Heart left ventricle (tissue), 16 donors: ENCODE measurements at regions of chr11 and their contacts with region 1.

Region 1: GRCh38 chr11:111230122-111230465 is 15.4 kb upstream of the POU2AF2 start:
- DNase-seq: no peak
- ATAC-seq: peak; percentile 26 to 58 (median 38)
- H3K4me3 ChIP-seq: peak overlapping the region in 9 of 12 donors; percentile 39 to 64 (median 52)
- H3K27ac ChIP-seq: no peak overlapping the region
- H3K4me1 ChIP-seq: peaks cover 0 to 5% (median 0%) of the 10 kb centered on the region in 12 donors
- H3K27me3 ChIP-seq: peaks cover 0 to 7% (median 0%) of the 10 kb centered on the region in 9 donors
- CTCF ChIP-seq: no peak
- POLR2A ChIP-seq: no peak

Region 2: DNA sequence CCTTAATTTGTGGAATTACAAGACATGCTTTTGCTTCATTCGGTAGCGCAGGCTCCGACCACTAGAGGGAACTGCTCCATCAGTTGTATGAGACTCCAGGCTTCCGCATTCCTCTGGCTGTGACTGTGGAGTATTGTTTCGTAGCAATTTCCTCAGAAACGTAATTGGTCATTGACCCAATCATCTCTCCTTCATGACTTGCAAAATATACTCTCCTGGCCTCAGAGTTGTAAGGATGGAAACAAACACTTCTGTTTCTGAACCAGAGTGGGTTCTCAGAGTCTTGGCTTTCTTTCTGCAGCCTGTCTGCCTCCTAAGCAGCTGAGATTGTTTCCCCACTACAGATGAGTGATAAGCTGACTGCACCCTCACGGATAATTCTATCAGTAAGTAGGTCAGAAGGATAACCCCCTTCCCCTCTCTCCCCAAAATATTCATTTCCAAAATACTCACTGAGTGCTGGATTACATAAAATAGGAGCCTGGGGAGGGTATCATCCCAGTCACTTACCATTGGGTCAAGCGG is 1283.7 kb before region 1 on chr11:
- intact Hi-C with region 1: loop called in 1 of 10 experiments (anchors 5 kb)
- DNase-seq: peak; percentile 81 to 90 (median 84)
- ATAC-seq: peak; percentile 90 to 99 (median 99)
- H3K4me3 ChIP-seq: peak overlapping the region in 10 of 12 donors; percentile 10 to 51 (median 34)
- H3K27ac ChIP-seq: peak overlapping the region in 11 of 12 donors; percentile 43 to 77 (median 60)
- H3K4me1 ChIP-seq: peaks cover 0 to 8% (median 4%) of the 10 kb centered on the region in 12 donors
- H3K27me3 ChIP-seq: no peaks in the 10 kb centered on the region
- CTCF ChIP-seq: peak; percentile 83 to 98 (median 90)
- POLR2A ChIP-seq: peak in 1 of 2 donors; percentile 49

Region 3: DNA sequence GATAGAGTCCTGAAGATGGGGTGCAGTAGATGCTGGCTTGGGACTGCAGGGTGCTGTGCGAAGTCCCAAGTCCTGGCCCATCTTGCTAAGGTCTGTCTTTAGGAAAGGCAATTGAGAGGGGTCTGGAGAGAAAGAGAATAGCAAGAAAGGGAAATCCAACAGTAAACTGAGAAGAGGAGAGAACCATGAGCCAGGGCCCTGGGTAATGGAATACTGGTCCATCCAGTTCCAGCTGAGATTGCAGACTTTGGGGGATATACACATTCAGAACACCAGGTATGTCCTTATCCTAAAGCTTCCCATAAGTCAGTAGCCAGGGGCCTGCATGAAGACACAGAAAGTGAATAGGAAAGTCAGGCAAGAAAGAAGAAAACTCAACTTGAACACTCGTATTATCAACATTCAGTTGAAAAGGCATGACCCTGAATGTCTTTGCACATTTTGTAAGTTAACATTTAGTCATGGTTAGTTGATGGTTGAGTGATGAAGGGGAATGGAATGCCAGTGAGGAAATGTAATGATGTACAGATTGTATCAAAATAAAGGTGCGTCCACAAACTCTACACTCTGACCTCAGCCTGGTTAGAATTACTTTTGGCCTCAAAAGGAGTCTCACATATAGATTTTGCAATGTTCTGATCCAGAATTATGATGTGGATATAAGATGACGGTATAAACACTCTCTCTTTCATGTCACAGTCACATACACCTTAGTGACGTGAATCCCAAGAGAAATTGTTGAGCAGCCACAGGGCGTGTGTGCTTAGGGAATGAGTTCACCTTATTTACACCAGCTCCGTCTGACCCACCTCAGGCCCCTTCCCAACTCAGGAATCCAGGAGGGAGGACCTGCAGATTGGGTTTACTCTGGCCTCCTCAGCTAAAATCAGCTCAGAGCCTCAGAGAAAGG is 1034.0 kb before region 1 on chr11:
- intact Hi-C with region 1: loop called in 6 of 10 experiments (anchors 2 to 10 kb)
- DNase-seq: no peak
- ATAC-seq: no peak
- H3K4me3 ChIP-seq: no peak overlapping the region
- H3K27ac ChIP-seq: no peak overlapping the region
- H3K4me1 ChIP-seq: peaks cover 0 to 10% (median 0%) of the 10 kb centered on the region in 12 donors
- H3K27me3 ChIP-seq: no peaks in the 10 kb centered on the region
- CTCF ChIP-seq: no peak
- POLR2A ChIP-seq: no peak

Region 4: DNA sequence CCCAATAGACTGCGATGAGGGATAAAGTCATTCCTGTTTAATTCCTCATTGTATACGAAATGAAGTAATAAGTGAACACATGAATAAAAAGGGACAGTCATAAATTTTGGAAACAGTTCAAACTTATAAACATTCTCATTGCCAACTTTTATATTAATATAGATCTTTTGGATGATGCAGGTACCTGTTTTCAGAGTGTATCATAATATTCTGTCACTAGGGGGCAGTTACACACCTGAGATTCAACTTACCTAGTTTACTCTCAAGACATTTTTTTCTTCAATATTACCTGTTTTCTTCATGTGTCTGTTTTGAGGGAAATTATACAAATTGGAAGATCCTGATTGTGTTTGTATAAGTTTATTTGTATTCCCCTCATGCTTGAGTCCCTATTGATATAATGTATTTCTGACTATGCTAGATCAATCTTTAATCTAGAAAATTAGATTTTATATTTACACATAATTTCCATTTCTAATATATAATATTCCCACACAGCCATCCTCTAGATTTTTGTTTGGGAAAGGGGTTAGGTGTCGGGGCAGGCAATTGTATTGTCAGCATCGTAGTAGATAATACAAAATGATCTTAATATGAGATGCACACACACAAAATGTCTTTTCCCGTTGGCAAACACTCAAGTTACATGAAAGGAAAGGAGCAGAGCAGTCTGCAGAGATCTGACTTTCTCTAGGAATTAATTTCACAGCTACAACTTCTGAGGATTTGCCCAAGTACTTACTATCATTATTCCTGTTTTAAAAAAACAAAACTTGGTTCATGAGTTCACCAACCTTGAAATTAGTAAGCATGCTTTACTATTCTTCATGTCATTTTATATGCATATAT is 782.0 kb before region 1 on chr11:
- intact Hi-C with region 1: loop called in 4 of 10 experiments (anchors 5 to 10 kb)
- DNase-seq: no peak
- ATAC-seq: no peak
- H3K4me3 ChIP-seq: no peak overlapping the region
- H3K27ac ChIP-seq: no peak overlapping the region
- H3K4me1 ChIP-seq: peaks cover 0 to 13% (median 0%) of the 10 kb centered on the region in 12 donors
- H3K27me3 ChIP-seq: no peaks in the 10 kb centered on the region
- CTCF ChIP-seq: peak; percentile 12 to 55 (median 28)
- POLR2A ChIP-seq: no peak

Region 5: DNA sequence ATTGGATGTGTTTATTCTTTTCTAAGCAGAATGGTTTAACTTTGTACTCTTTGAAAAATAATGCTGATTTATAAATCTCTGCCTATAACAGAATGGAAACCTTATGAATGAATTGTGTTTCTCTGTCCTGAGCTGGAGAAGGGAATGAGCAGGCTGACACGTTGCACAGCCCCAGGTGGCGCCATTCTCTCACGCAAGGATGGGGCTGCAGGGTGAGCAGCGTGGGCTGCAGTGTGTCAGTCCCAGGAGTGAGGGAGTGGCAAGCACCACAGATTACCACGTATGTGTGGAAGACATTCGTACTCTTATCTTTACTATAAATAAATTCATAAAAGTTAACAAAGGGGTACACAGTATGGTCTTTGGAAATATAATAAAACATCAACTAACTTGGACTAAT is 766.9 kb before region 1 on chr11:
- intact Hi-C with region 1: loop called in 5 of 10 experiments (anchors 5 to 10 kb)
- DNase-seq: peak in 2 of 5 donors; percentile 24 to 50
- ATAC-seq: peak in 3 of 4 donors; percentile 69 to 79 (median 72)
- H3K4me3 ChIP-seq: no peak overlapping the region
- H3K27ac ChIP-seq: no peak overlapping the region
- H3K4me1 ChIP-seq: no peaks in the 10 kb centered on the region
- H3K27me3 ChIP-seq: no peaks in the 10 kb centered on the region
- CTCF ChIP-seq: peak in 8 of 12 donors; percentile 24 to 54 (median 49)
- POLR2A ChIP-seq: no peak

Region 6: GRCh38 chr11:111162305-111162704 is 67.8 kb before region 1 on chr11:
- intact Hi-C with region 1: no loop called
- DNase-seq: no peak
- ATAC-seq: no peak
- H3K4me3 ChIP-seq: no peak overlapping the region
- H3K27ac ChIP-seq: no peak overlapping the region
- H3K4me1 ChIP-seq: no peaks in the 10 kb centered on the region
- H3K27me3 ChIP-seq: peaks cover 0 to 3% (median 0%) of the 10 kb centered on the region in 9 donors
- CTCF ChIP-seq: no peak
- POLR2A ChIP-seq: no peak

Region 7: GRCh38 chr11:111399187-111400031 is 169.3 kb after region 1 on chr11:
- intact Hi-C with region 1: no loop called
- DNase-seq: no peak
- ATAC-seq: no peak
- H3K4me3 ChIP-seq: no peak overlapping the region
- H3K27ac ChIP-seq: no peak overlapping the region
- H3K4me1 ChIP-seq: no peaks in the 10 kb centered on the region
- H3K27me3 ChIP-seq: no peaks in the 10 kb centered on the region
- CTCF ChIP-seq: no peak
- POLR2A ChIP-seq: no peak